ENCODE measurements at regions of chr6 and their contacts with region 1.

Region 1: DNA sequence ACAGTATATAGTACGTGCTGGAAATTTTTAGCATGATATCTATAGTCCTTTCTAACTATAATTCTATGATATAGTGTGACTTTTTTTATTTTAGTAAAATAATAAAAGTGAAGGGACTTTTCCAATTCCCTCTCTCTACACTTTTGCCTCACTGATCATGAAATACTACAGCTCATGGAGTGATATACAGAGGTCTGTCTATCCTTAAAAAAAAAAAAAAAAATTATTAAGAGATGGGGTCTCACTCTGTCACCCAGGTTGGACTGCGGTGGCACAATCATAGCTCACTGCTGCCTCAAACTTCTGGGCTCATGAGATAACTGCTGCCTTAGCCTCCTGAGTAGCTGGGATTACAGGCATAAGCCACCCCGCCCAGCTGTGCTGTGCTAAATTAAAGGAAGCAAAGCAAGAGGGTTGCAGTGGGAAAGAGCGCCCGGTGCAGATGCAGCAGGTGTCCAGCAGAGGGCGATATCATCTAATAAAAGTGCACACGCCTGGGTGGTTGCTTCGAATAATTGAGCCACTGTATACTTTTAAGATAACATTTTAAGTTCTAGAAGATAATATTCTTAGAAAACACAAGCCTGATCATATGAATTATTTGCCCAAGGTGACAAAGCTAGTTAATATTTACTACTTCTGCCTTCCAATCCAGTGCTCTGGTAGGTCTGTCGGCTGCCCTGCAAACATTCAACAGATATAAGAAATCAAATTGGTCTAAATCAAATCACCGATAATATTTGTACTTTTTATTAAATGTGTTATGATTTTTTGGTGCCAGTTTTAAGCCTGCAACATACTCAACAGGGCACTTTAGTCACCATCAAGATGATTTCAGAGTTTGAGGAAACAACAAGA is 94.9 kb upstream of the NT5E start:
- DNase-seq: peak; percentile 36
- ATAC-seq: peak; percentile 95
- H3K4me3 ChIP-seq: no peak overlapping the region
- H3K27ac ChIP-seq: no peak overlapping the region
- H3K4me1 ChIP-seq: peaks cover 2% of the 10 kb centered on the region
- H3K27me3 ChIP-seq: no peaks in the 10 kb centered on the region; a peak in 3 of 5 replicates
- CTCF ChIP-seq: peak; percentile 89
- EP300 ChIP-seq: no peak
- POLR2A ChIP-seq: no peak
- RAD21 ChIP-seq: peak; percentile 87

Region 2: DNA sequence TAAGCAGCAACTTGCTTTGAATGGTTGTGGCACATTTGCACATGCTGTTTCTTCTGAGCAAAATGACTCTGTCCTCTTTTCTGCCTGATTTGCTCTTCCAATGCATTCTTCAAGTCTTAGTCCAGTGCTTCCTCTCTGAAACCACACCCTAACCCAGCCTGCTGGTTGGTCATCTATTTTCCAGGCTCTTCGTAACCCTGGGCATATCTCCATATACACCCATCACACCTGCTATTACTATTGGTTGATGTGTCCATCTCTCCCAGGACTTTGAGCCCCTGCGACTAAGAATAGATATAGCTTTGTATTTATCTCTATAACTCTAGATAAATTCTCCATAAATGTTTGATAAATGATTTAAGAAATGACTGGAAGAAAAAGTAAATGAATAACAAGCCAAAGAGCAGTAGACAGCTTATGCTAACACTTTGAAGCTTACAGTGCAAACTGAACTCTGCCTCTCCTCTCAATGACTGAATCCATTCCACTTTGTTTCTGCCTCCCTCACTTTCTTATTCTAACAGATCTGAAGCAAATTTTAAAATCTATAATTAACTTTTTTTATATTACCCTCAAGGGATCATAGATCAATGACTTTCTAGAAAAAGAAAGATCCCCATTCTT is 35.2 kb after region 1 on chr6:
- CTCF ChIA-PET with region 1: no interaction called
- POLR2A ChIA-PET with region 1: no interaction called
- in situ Hi-C with region 1: no loop called
- intact Hi-C with region 1: loop called (anchors 1 kb)
- DNase-seq: peak; percentile 87
- ATAC-seq: peak; percentile 98
- H3K4me3 ChIP-seq: no peak overlapping the region; a peak in 2 of 6 replicates
- H3K27ac ChIP-seq: peak overlapping the region; percentile 71
- H3K4me1 ChIP-seq: peaks cover 56% of the 10 kb centered on the region
- H3K27me3 ChIP-seq: no peaks in the 10 kb centered on the region
- CTCF ChIP-seq: no peak
- EP300 ChIP-seq: 0 out of 4 replicates have a peak, but pooled peaks of 1 of the 2 experiments have one; percentile 3
- POLR2A ChIP-seq: no peak
- RAD21 ChIP-seq: no peak

Region 3: DNA sequence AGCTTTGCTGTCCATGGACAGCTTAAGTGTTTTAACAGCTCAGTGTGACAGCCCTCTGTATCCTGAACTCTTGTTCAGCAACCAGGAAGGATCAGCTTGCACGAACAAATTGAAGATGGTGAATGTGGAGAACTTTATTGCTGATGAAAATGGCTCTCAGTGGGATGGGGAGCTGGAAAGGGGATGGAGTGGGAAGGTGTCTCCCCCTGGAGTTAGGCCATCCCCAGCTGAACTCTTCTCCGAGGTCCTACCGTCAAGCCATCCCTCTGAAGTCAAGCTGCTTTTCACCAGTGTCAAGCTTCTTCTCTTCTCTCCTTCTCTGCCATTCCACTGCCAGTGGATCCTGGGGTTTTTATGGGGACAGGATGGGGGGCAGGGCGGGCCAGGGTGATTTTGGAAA is 121.5 kb after region 1 on chr6:
- CTCF ChIA-PET with region 1: interaction called, 96 read pairs
- POLR2A ChIA-PET with region 1: no interaction called
- in situ Hi-C with region 1: loop called (anchors 5 kb)
- intact Hi-C with region 1: no loop called
- DNase-seq: no peak
- ATAC-seq: peak; percentile 59
- H3K4me3 ChIP-seq: no peak overlapping the region
- H3K27ac ChIP-seq: no peak overlapping the region
- H3K4me1 ChIP-seq: no peaks in the 10 kb centered on the region
- H3K27me3 ChIP-seq: no peaks in the 10 kb centered on the region
- CTCF ChIP-seq: peak; percentile 60
- EP300 ChIP-seq: no peak
- POLR2A ChIP-seq: no peak
- RAD21 ChIP-seq: peak; percentile 51; the same call in 1 of the 2 replicates

Region 4: DNA sequence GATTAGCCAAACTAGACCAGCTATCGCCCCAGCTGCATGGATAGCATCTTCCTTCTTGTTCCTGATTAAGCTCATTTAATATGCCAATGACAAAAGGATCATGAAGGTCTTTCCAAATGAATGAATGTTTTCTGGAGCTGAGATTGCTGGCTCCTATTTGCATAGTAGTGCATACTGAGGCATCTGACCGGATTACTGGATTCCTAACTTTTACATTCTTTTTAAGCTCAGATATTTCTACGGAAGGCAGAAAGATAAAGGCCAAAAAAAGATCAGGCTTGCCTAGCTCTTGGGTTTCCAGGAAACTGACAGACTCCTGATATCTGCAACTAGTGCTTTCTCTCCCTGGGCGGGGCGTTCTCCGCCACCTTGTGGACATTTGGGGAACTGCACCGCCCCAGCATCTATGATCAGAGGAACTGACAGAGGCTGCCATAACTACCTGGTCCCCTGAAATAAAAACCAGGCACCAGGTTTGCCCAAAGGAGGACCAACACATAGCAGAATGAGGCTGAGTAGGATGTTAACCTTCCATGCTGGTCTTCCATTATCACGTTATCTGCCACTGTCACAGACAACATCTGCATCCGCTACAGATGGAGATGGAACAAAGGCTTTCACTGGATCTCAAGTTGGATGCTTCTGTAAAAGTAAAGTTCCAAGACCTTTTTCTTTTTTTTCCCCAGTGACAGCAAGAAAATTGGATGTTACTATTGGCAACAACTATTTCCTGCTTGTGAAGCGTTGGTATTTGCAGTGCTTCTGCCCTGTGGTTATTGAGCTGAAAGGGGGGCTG is 128.1 kb after region 1 on chr6:
- CTCF ChIA-PET with region 1: interaction called, 96 read pairs
- POLR2A ChIA-PET with region 1: interaction called, 3 read pairs
- in situ Hi-C with region 1: loop called (anchors 5 kb)
- intact Hi-C with region 1: loop called (anchors 1 kb)
- DNase-seq: peak; percentile 50
- ATAC-seq: peak; percentile 94
- H3K4me3 ChIP-seq: no peak overlapping the region; a peak in 1 of 6 replicates
- H3K27ac ChIP-seq: no peak overlapping the region
- H3K4me1 ChIP-seq: peaks cover 7% of the 10 kb centered on the region; the same call in 1 of the 2 replicates
- H3K27me3 ChIP-seq: no peaks in the 10 kb centered on the region
- CTCF ChIP-seq: peak; percentile 94
- EP300 ChIP-seq: no peak
- POLR2A ChIP-seq: no peak
- RAD21 ChIP-seq: peak; percentile 92

Region 5: DNA sequence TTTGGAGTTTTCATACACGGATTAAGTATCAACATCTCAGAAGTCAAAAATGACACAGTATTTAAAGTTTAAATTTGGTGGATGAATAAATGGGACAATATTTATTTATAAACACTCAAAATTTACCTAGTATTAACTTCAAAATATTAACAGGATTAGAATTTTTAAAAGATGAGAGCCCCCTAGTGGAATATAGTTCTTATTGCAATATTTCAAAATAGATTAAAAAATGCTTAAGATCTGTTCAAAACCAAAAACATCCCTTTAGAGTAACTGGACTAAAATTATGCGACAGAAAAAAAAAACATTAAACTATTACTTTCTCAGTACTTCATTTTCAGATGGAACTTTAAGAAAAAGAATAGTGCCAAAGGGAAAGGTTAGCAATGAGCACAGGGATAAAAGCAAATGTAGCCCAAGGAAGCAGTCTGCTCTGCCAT is 182.1 kb after region 1 on chr6:
- CTCF ChIA-PET with region 1: interaction called, 21 read pairs
- POLR2A ChIA-PET with region 1: no interaction called
- in situ Hi-C with region 1: no loop called
- intact Hi-C with region 1: loop called (anchors 1 kb)
- DNase-seq: no peak
- ATAC-seq: no peak
- H3K4me3 ChIP-seq: no peak overlapping the region
- H3K27ac ChIP-seq: no peak overlapping the region
- H3K4me1 ChIP-seq: no peaks in the 10 kb centered on the region
- H3K27me3 ChIP-seq: no peaks in the 10 kb centered on the region
- CTCF ChIP-seq: no peak
- EP300 ChIP-seq: no peak
- POLR2A ChIP-seq: no peak
- RAD21 ChIP-seq: no peak

Region 6: DNA sequence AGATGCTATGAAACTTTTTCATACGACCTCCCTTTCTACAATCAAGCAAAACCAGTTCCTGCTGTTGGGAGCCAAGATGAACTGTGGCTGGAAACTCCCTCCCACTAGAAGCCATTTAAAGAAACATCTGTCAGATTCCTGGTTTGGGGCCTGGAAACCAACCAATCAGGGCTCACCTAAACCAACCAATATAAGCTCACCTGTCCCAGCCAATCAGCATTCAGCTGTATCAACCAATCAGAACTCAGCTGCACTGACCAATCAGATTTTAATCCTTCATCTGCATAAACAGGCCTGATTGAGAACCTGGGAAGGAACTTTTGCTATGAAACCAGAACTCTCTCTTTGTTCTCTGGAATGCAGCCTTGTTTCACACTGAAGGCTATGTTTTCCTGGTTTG is 196.3 kb after region 1 on chr6:
- CTCF ChIA-PET with region 1: no interaction called
- POLR2A ChIA-PET with region 1: no interaction called
- in situ Hi-C with region 1: no loop called
- intact Hi-C with region 1: no loop called
- DNase-seq: no peak
- ATAC-seq: no peak
- H3K4me3 ChIP-seq: no peak overlapping the region
- H3K27ac ChIP-seq: no peak overlapping the region
- H3K4me1 ChIP-seq: no peaks in the 10 kb centered on the region
- H3K27me3 ChIP-seq: no peaks in the 10 kb centered on the region
- CTCF ChIP-seq: no peak
- EP300 ChIP-seq: no peak
- POLR2A ChIP-seq: no peak
- RAD21 ChIP-seq: no peak